ENCODE measurements at regions of chr16 and their contacts with region 1.

Region 1: DNA sequence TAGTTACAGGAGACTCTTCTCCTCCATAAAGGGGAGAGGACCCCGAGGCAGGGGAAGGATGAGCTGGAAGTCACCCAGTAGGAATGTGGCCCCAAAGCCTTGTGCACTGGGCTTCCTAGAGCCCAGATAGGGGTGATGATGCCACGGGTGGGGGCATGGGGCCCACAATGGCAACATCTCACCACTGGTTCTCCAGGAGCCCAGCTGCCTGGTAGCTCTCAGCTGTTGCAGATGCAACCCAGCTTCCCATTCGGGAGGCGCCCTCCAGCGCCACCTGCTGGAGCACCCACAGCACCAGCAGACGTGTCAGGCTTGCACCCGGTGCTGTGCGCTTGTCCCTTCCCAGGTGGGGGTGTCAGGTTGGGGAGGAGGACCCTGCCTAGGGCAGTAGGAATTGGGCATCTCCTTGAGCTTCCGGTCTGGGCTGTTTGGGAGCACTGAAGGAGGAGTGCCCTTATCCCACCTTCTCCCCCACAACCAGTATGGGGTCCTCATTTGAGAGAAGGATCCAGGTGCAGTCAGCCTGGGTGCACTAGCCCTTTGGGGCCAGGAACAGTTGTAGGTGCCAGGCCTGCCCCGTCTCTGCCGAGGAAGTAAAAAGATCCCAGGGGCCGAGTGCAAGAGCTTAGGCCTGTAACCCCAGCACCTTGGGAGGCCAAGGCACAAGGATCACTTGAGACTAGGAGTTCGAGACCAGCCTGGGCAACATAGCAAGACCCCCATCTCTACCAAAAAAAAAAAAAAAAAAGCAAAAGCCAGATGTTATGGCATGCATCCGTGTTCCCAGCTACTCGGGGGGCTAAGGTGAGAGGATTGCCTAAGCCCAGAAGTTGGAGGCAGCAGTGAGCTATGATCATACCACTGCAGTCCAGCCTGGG is 14.4 kb downstream of the CDIPT start:
- DNase-seq: peak; percentile 59 to 88 (median 78)
- ATAC-seq: peak; percentile 90 to 94 (median 92)
- H3K4me3 ChIP-seq: no peak overlapping the region
- H3K4me3 Mint-ChIP-seq: no peak overlapping the region
- H3K27ac ChIP-seq: no peak overlapping the region
- H3K27ac Mint-ChIP-seq: peak overlapping the region; percentile 69 to 72
- H3K4me1 ChIP-seq: peaks cover 0 to 9% of the 10 kb centered on the region in 2 experiments
- H3K4me1 Mint-ChIP-seq: peaks cover 5 to 13% (median 12%) of the 10 kb centered on the region in 3 donors
- H3K27me3 ChIP-seq: no peaks in the 10 kb centered on the region
- H3K27me3 Mint-ChIP-seq: no peaks in the 10 kb centered on the region

Region 2: DNA sequence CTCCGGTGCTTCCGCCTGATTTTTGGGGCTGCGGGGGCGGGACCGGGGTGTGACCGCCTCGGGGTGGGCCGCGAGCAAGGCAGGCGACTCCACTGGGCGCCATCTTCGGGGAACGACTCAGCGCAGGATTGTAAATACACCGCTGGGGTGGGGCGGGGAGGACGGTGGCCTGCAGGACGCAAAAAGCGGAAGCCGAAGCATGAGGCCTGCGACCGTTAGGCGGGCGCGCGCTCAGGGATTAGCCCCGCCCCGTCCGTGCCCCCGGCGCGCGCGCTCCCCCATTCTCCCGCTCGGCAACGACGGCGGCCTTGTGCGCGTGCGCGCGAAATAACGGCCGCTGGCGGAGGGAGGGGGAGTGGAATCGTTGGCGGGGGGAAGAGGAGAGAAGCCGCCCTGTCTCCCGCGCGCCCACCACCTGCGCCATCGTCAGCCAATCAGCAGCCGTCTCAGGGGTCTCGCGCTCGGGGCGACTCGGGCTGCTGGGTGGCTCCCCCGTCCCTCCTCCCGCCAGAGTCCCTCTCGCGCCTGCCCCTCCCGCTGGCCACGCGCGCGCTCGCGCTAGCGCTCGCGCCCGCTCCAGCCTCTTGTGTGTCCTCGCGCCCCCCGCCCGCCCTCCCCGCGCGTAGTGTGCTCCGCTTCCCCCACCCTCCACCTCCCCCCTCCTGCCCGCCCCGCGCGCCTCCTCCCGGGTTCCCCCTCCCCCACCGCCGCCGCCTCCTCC is 43.1 kb before region 1 on chr16:
- CTCF ChIA-PET with region 1: interaction called, 3 to 36 read pairs
- POLR2A ChIA-PET with region 1: interaction called in 1 of 2 experiments, 7 read pairs
- DNase-seq: peak; percentile 96 to 99 (median 98)
- ATAC-seq: peak; percentile 64 to 71 (median 68)
- H3K4me3 ChIP-seq: peak overlapping the region; percentile 83 to 88
- H3K4me3 Mint-ChIP-seq: peak overlapping the region; percentile 84 to 100 (median 96)
- H3K27ac ChIP-seq: peak overlapping the region; percentile 90
- H3K27ac Mint-ChIP-seq: peak overlapping the region; percentile 99 to 100
- H3K4me1 ChIP-seq: peaks cover 28 to 49% of the 10 kb centered on the region in 2 experiments
- H3K4me1 Mint-ChIP-seq: peaks cover 43 to 45% (median 45%) of the 10 kb centered on the region in 3 donors
- H3K27me3 ChIP-seq: no peaks in the 10 kb centered on the region
- H3K27me3 Mint-ChIP-seq: no peaks in the 10 kb centered on the region

Region 3: DNA sequence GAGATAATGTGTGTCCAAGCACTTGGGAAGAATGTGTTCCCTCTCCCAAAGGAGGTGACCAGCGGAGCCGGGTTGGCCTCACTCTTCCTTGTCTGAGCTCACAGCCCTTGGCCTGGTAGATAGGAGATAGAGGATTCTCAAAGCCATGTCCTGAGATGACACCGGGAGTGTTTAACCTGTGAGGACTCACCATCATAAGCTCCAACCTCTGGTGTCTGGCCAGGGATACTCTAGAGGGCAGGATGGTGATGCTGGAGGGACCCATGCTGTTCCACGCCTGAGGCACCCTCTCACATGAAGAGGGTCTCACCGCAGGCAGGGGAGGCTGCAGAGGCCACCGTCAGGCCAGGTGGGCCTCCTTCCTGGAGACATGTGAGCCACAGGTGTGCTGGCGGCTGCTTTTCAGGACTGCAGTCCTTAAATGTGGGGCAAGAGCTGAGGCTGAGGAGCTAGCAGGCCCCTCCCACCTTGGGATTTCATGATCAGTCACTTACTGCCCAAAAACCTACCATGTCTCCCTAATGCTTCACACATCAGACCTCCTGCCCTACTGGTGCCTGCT is 944.9 kb after region 1 on chr16:
- CTCF ChIA-PET with region 1: interaction called in 1 of 2 experiments, 12 read pairs
- POLR2A ChIA-PET with region 1: no interaction called
- DNase-seq: no peak
- ATAC-seq: no peak
- H3K4me3 ChIP-seq: no peak overlapping the region
- H3K4me3 Mint-ChIP-seq: no peak overlapping the region
- H3K27ac ChIP-seq: no peak overlapping the region
- H3K27ac Mint-ChIP-seq: no peak overlapping the region
- H3K4me1 ChIP-seq: no peaks in the 10 kb centered on the region
- H3K4me1 Mint-ChIP-seq: no peaks in the 10 kb centered on the region
- H3K27me3 ChIP-seq: peaks cover 0 to 19% of the 10 kb centered on the region in 2 experiments
- H3K27me3 Mint-ChIP-seq: peaks cover 0 to 3% of the 10 kb centered on the region in 2 donors